ENCODE measurements at regions of chr17 and their contacts with region 1.

Region 1: DNA sequence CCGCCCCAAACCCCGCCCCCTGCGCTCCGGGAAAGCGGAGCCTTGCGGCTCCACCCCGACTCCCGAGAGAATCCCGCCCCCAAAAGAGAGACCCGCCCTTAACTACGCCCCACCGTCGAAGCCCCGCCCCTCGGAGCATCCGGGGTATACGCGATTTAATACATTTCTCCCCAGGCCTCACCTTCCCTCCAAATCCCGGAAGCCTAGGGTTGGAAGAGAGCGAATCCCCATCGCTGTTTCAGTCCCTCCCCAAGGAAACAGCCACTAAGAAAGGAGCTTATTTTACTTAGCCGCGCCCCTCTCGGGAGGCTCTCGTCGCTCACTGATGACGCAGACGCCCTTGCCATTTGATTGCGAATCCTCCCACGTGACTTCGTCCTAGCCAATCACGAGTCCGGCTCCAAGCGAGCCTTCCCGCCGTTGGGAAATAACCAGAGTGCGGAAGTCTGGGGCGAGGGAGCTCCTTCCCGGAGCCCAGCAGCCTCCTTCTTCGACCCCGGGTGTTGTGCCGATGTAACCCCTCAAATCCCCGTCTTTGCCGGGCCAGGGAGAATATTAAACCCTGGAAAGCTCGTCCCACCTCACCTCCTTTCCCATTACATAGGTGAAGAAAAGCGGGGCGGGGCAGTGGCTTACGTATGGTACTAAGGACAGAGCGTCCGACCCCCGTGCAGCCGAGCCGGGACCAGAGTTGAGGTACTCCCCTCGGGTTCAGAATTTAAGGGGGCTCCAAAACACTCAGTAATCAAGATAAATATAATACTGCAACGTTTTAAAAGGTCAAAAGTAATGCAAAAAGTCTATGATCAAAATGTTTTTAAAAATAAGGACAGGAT is 462 bp upstream of the FDXR start:
- DNase-seq: peak; percentile 99 to 100
- ATAC-seq: peak; percentile 97 to 99
- H3K4me3 ChIP-seq: peak overlapping the region; percentile 71 to 83 (median 76)
- H3K27ac ChIP-seq: peak overlapping the region; percentile 86 to 95 (median 93)
- H3K4me1 ChIP-seq: peaks cover 14% of the 10 kb centered on the region in 2 donors
- H3K27me3 ChIP-seq: no peaks in the 10 kb centered on the region
- CTCF ChIP-seq: peak in 1 of 5 experiments; percentile 31
- POLR2A ChIP-seq: peak; percentile 77 to 97

Region 2: DNA sequence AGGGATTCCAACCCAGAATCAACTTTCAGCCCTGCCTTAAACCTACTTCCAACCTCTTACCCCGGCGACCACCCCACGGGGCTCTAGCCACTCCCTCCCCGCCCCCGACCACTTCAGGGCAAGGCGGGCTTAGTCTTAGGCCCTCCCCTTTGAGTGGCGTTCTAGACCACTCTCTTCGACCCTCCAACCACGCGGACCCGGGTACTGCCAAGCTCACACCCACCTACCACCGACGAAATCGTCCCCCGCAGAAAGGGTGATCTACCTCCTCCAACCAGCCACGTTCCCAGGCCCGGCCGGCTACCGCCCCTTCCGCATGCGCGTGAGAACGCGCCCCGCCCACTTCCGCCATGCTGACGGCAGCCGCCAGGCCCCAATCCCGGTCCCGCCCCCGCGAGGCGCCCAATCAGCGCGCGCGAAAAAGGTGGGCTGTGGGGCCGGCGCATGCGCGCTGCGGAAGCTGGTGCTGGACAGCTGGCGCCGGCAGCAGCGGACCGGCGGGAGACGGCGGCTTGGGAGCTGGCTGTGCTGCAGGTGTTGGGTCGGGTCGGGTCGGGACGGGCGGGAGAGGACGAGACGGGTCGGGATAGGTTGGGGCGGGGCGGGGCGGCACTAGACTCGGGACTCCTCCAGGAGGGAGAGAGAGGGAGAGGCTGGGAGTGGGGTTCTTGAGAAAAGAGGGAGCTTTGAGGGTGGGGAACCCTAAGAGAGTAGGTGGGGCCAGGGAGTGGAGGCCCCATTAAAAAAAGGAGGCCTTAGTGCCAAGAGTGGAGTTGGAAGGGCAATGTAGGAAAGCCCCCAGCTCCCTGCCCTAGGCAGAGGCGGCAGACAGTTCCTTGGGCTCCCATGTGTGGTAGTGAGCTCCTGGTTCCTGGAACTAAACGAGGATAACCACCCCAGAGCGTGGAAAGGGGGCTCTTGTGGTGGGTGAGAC is 96.9 kb before region 1 on chr17 and contains the start of gene NAT9:
- in situ Hi-C with region 1: no loop called
- intact Hi-C with region 1: loop called (anchors 1 kb)
- DNase-seq: peak; percentile 93 to 96
- ATAC-seq: peak; percentile 95 to 96
- H3K4me3 ChIP-seq: peak within 1 kb of the TSS; percentile 75 to 99 (median 93)
- H3K27ac ChIP-seq: peak within 1 kb of the TSS; percentile 84 to 91 (median 87)
- H3K4me1 ChIP-seq: peaks cover 17 to 23% of the 10 kb centered on the region in 2 donors
- H3K27me3 ChIP-seq: no peaks in the 10 kb centered on the region
- CTCF ChIP-seq: no peak
- POLR2A ChIP-seq: peak; percentile 65 to 77
- total RNA-seq, gene NAT9: 7.7 to 27.4 (median 14.5) TPM

Measured in gastrocnemius medialis (tissue), 4 donors.